OCI-LY7 (cell line): ENCODE measurements at regions of chr13 and their contacts with region 1.

Region 1: DNA sequence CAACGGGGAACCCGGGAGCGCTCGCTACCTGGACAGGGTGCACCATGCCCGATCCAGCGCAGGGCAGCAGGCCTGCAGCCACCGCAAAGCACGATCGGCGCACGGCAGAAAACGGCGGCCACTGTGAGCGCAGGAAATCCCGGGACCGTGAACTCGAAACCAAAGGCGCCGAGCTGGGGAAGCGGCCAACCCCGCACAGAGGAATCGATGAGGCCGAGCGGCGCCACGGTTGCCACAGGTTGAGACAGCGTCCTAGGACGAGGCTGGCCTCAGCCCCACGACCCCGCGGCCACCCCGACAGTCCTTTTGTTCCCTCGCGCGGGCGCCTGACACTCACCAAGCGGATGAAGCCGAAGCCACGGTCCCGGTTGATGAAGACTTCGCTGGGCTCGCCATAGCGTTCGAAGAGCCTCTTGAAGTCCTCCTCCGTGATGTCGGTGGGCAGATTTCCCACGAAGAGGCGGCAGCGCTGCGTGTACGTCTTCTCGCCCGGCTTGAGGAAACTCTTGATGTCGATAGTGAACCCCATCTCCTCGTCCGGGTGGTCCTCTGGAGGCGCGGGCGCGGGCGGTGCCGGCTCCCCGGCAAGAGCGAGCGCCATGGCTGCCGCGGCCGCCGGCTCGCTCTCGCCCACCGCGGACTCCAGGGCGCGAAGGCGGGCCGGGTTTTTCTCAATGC is 557 bp downstream of the PSPC1 start:
- DNase-seq: peak; percentile 63
- H3K4me3 ChIP-seq: peak overlapping the region; percentile 100
- H3K27ac ChIP-seq: peak overlapping the region; percentile 92
- H3K4me1 ChIP-seq: peaks cover 5% of the 10 kb centered on the region
- CTCF ChIP-seq: no peak

Region 2: DNA sequence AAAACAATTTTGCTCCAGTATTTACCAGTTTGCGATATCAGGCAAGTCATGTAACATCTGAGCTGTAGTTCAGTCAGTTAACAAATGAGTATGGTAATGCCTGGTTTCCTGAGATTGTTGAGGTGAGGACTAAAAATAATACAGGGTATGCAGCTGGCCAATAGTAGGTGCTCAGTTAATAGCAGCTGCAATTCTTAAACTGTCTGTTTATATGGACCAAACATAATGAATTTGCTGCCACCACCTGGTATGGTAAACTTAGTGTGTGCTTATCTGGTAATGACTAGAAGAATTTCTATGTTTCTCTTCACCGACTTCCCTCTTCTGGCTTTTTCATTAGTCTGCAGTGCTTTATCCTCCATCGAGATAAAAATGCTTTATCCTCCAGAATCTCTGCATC is 185.4 kb after region 1 on chr13:
- CTCF ChIA-PET with region 1: no interaction called
- POLR2A ChIA-PET with region 1: no interaction called
- intact Hi-C with region 1: loop called (anchors 5 kb)
- DNase-seq: peak; percentile 70
- H3K4me3 ChIP-seq: no peak overlapping the region
- H3K27ac ChIP-seq: peak overlapping the region; percentile 57
- H3K4me1 ChIP-seq: peaks cover 29% of the 10 kb centered on the region
- CTCF ChIP-seq: peak; percentile 71

Region 3: GRCh38 chr13:20049558-20050473 is 267.6 kb after region 1 on chr13:
- CTCF ChIA-PET with region 1: no interaction called
- POLR2A ChIA-PET with region 1: no interaction called
- intact Hi-C with region 1: no loop called
- DNase-seq: no peak
- H3K4me3 ChIP-seq: no peak overlapping the region
- H3K27ac ChIP-seq: no peak overlapping the region
- H3K4me1 ChIP-seq: no peaks in the 10 kb centered on the region
- CTCF ChIP-seq: no peak